Left ventricle myocardium inferior (tissue), 1 donor: ENCODE measurements at regions of chr6 and their contacts with region 1.

Region 1: GRCh38 chr6:36615018-36615761 is 21.0 kb downstream of the SRSF3 start:
- DNase-seq: no peak
- H3K4me3 ChIP-seq: no peak overlapping the region
- H3K27ac ChIP-seq: peak overlapping the region; percentile 43
- H3K4me1 ChIP-seq: peaks cover 45% of the 10 kb centered on the region
- H3K27me3 ChIP-seq: no peaks in the 10 kb centered on the region
- CTCF ChIP-seq: peak; percentile 69

Region 2: DNA sequence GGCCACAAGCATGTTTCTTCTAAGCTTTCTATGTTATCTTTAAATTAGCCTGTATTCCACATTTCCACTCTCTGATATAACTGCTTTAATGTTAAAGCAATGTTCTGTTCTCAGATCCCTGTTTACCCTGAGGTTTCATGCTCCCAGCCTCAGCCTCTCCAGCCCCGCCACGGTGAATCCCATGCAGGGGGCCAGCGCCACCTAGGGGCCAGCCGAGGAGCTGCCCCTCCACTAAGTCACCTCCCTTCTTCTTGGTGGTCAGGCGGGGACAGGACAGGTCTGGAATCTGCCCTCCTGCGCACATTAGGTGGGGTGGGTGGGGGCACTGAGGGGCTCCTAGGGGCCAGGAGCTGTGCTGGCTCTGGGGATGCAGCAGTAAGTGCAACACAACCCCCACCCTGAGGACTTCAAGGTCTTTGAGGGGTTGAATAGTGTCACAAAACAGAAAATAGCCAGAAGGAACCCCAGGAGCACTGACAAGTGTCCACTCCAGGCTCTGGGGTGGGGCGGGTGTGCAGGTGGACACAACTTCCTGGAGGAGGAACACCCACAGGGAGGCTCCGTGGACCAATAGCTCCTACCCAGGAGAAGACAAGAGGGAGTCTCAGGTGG is 144.1 kb after region 1 on chr6:
- intact Hi-C with region 1: loop called (anchors 10 kb)
- DNase-seq: peak; percentile 77
- H3K4me3 ChIP-seq: no peak overlapping the region
- H3K27ac ChIP-seq: no peak overlapping the region
- H3K4me1 ChIP-seq: peaks cover 27% of the 10 kb centered on the region
- H3K27me3 ChIP-seq: no peaks in the 10 kb centered on the region
- CTCF ChIP-seq: peak; percentile 97

Region 3: GRCh38 chr6:36839749-36840431 is 224.7 kb after region 1 on chr6:
- intact Hi-C with region 1: loop called (anchors 10 kb)
- DNase-seq: peak; percentile 67
- H3K4me3 ChIP-seq: peak overlapping the region; percentile 63
- H3K27ac ChIP-seq: peak overlapping the region; percentile 92
- H3K4me1 ChIP-seq: peaks cover 56% of the 10 kb centered on the region
- H3K27me3 ChIP-seq: peaks cover 20% of the 10 kb centered on the region
- CTCF ChIP-seq: peak; percentile 49